ENCODE measurements at regions of chr12 and their contacts with region 1.

Region 1: DNA sequence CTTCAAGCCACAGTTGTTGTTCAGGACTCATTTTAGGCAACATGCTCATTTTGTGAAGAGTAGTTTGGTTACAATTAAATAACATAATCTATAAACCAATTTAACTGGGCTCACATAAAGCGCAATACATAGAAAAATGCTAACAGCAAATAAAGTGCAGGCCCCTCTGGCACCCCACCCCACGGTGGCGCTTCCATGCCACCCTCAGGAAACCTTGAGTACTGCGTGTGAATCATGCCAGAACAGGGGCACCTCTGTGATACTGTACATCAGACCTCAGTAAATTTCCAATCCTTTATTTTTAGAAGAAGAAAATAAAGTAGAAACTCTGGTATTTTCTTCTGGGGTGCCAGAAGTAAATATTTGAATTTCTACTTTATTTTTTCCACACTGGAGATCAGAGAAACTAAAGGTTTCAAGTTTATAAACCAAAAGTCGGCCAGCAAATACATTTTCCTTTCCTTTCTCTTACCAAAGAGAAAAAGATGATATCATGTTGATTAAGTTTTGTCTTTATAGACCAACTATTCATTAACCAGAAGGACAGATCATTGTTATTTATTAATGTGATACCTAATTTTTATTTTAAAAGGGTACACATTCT is 316.8 kb downstream of the PAWR start:
- DNase-seq: peak; percentile 49
- H3K4me3 Mint-ChIP-seq: no peak overlapping the region
- H3K27ac Mint-ChIP-seq: no peak overlapping the region
- H3K4me1 Mint-ChIP-seq: peaks cover 5% of the 10 kb centered on the region
- H3K27me3 Mint-ChIP-seq: no peaks in the 10 kb centered on the region
- CTCF ChIP-seq: peak; percentile 73

Region 2: GRCh38 chr12:79001404-79001803 is 372.6 kb before region 1 on chr12:
- CTCF ChIA-PET with region 1: no interaction called
- POLR2A ChIA-PET with region 1: no interaction called
- intact Hi-C with region 1: no loop called
- DNase-seq: no peak
- H3K4me3 Mint-ChIP-seq: no peak overlapping the region
- H3K27ac Mint-ChIP-seq: no peak overlapping the region
- H3K4me1 Mint-ChIP-seq: no peaks in the 10 kb centered on the region
- H3K27me3 Mint-ChIP-seq: no peaks in the 10 kb centered on the region
- CTCF ChIP-seq: no peak

Region 3: GRCh38 chr12:79329933-79330332 is 44.1 kb before region 1 on chr12:
- CTCF ChIA-PET with region 1: no interaction called
- POLR2A ChIA-PET with region 1: no interaction called
- intact Hi-C with region 1: no loop called
- DNase-seq: no peak
- H3K4me3 Mint-ChIP-seq: no peak overlapping the region
- H3K27ac Mint-ChIP-seq: no peak overlapping the region
- H3K4me1 Mint-ChIP-seq: no peaks in the 10 kb centered on the region
- H3K27me3 Mint-ChIP-seq: no peaks in the 10 kb centered on the region
- CTCF ChIP-seq: no peak

Region 4: GRCh38 chr12:79358716-79359300 is 15.2 kb before region 1 on chr12:
- CTCF ChIA-PET with region 1: interaction called, 10 read pairs
- POLR2A ChIA-PET with region 1: no interaction called
- intact Hi-C with region 1: no loop called
- DNase-seq: no peak
- H3K4me3 Mint-ChIP-seq: no peak overlapping the region
- H3K27ac Mint-ChIP-seq: no peak overlapping the region
- H3K4me1 Mint-ChIP-seq: no peaks in the 10 kb centered on the region
- H3K27me3 Mint-ChIP-seq: no peaks in the 10 kb centered on the region
- CTCF ChIP-seq: no peak

Region 5: GRCh38 chr12:79388011-79388410 is 14.0 kb after region 1 on chr12:
- CTCF ChIA-PET with region 1: interaction called, 14 read pairs
- POLR2A ChIA-PET with region 1: interaction called, 6 read pairs
- intact Hi-C with region 1: no loop called
- DNase-seq: no peak
- H3K4me3 Mint-ChIP-seq: no peak overlapping the region
- H3K27ac Mint-ChIP-seq: no peak overlapping the region
- H3K4me1 Mint-ChIP-seq: no peaks in the 10 kb centered on the region
- H3K27me3 Mint-ChIP-seq: no peaks in the 10 kb centered on the region
- CTCF ChIP-seq: no peak

Measured in MCF 10A (cell line).